ENCODE measurements at regions of chr6 and their contacts with region 1.

Region 1: GRCh38 chr6:11232193-11232769 is at the start of gene NEDD9:
- DNase-seq: peak; percentile 96
- ATAC-seq: peak; percentile 98 to 99 (median 98)
- H3K4me3 ChIP-seq: peak within 1 kb of the TSS; percentile 30 to 84 (median 71)
- H3K27ac ChIP-seq: peak within 1 kb of the TSS; percentile 84 to 94 (median 88)
- H3K4me1 ChIP-seq: peaks cover 0 to 56% (median 11%) of the 10 kb centered on the region in 12 donors
- H3K27me3 ChIP-seq: no peaks in the 10 kb centered on the region
- CTCF ChIP-seq: peak in 1 of 12 donors; percentile 8
- POLR2A ChIP-seq: peak; percentile 91 to 99
- total RNA-seq, gene NEDD9: 10.2 to 55.7 (median 20.9) TPM

Region 2: GRCh38 chr6:11069760-11070159 is 162.5 kb before region 1 on chr6:
- intact Hi-C with region 1: no loop called
- DNase-seq: no peak
- ATAC-seq: no peak
- H3K4me3 ChIP-seq: no peak overlapping the region
- H3K27ac ChIP-seq: no peak overlapping the region
- H3K4me1 ChIP-seq: no peaks in the 10 kb centered on the region
- H3K27me3 ChIP-seq: no peaks in the 10 kb centered on the region
- CTCF ChIP-seq: no peak
- POLR2A ChIP-seq: no peak

Region 3: DNA sequence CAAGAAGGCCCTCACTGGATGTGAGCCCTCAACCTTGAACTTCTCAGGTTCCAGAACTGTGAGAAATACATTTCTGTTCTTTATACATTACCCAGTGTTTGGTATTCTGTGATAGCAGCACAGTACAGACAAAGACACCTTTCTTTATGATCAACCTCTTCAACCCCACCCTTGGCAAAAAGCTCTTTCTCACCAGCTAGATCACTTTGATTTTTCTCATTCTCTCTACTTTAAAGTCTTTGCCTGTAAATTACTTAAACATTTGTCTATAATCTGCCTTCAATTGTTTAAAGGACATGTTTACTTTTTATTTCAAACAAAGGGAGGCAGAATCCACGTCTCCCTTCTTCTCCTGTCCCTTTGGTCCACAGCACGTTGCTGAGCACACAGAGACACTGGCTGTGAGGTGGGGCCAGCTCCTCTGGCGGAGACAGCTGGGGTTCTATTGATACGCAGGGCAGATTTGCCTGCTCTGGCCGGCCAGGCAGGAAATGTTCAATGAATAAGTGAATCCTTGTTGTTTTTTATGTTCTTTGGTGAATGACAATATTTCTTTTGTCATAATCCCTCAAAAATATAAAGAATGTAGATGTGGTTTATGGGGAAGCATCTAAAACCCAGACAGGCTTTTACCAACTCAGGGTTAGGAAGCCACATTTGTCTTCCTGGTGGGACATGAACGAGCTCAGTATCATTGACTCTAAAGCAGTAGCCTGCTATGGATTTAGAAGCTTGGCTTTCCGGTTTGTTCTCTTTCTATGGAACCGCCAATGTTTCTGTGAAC is 52.7 kb before region 1 on chr6:
- intact Hi-C with region 1: loop called in 4 of 10 experiments (anchors 5 to 10 kb)
- DNase-seq: no peak
- ATAC-seq: no peak
- H3K4me3 ChIP-seq: no peak overlapping the region
- H3K27ac ChIP-seq: no peak overlapping the region
- H3K4me1 ChIP-seq: no peaks in the 10 kb centered on the region
- H3K27me3 ChIP-seq: no peaks in the 10 kb centered on the region
- CTCF ChIP-seq: no peak
- POLR2A ChIP-seq: no peak

Region 4: DNA sequence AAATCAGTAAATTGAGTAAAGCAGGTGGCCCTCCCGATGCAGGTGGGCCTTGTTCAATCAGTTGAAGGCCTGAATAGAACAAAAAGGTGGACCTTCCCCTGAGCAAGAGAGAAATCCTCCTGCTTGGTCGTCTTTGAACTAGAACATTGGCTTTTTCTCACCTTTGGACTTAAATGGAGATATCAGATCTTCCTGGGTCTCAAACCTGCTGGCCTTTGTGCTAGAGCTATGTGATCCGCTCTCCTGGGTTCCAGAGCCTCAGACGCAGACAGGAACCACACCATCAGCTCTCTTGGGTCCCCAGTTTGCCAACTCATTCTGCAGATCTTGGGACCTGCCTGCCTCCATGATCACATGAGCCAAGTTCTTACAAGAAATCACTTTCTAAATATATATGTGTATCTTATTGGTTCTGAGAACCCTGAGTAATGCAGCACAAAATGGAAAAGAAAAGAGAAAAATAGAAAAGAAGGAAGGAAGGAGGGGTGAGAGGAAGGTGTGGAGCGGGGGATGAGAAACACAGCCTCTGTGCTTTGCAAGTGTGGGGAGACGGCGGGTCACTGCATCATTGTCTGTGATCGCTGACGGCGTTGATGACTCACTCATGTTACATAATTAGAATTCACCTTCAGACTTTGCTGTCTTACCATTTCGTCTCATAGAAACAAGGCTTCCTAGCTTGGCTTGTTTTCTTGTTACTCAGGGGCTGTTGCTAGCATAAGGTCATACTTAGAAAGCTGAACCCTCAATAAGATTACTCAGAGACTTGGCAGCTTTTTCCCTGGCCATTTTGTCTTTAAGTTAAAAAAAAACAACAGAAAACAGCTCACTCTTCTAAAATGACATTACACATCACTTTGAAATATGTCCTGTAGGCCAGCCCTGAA is 85.8 kb after region 1 on chr6:
- intact Hi-C with region 1: loop called in 1 of 10 experiments (anchors 10 kb)
- DNase-seq: peak in 4 of 5 donors; percentile 44 to 79 (median 62)
- ATAC-seq: peak; percentile 40 to 88 (median 76)
- H3K4me3 ChIP-seq: no peak overlapping the region
- H3K27ac ChIP-seq: peak overlapping the region in 11 of 12 donors; percentile 10 to 69 (median 61)
- H3K4me1 ChIP-seq: peaks cover 0 to 42% (median 16%) of the 10 kb centered on the region in 12 donors
- H3K27me3 ChIP-seq: no peaks in the 10 kb centered on the region
- CTCF ChIP-seq: no peak
- POLR2A ChIP-seq: no peak

Region 5: DNA sequence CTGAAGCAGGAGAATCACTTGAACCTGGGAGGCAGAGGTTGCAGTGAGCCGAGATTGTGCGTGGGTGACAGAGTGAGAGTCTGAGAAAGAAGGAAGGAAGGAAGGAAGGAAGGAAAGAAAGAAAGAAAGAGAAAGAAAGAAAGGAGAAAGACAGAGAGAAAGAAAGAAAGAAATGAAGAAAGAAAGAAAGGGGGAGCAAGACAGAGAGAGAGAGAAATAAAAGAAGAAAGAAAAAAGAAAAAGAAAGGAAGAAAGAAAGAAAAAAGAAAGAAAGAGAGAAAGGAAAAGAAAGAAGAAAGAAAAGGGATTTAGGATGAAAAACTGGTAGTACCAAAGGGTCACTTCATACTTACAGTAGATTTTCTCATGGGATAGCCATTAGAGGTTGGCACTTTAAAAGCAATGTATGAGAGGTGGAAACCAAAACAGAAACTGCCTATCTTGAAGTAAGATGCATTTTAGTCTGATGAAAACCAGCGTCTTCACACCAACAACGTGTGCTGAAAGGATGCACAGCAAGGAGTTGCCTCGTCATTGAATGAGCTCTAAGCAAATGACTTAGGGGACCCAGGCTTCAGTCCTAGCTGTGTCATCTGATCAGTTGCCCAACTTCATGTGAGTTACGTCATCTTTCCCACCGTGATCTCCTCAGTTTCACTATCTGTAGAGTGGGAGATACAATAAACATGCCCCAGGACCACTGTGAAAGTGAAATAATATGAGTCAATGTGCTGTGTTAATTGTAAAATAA is 134.1 kb after region 1 on chr6:
- intact Hi-C with region 1: loop called in 3 of 10 experiments (anchors 5 to 10 kb)
- DNase-seq: no peak
- ATAC-seq: no peak
- H3K4me3 ChIP-seq: no peak overlapping the region
- H3K27ac ChIP-seq: peak overlapping the region; percentile 71 to 95 (median 86)
- H3K4me1 ChIP-seq: peaks cover 4 to 74% (median 40%) of the 10 kb centered on the region in 12 donors
- H3K27me3 ChIP-seq: no peaks in the 10 kb centered on the region
- CTCF ChIP-seq: no peak
- POLR2A ChIP-seq: no peak

Measured in heart left ventricle (tissue), 16 donors.